Right ventricle myocardium superior (tissue), 1 donor: ENCODE measurements at regions of chr4 and their contacts with region 1.

Region 1: DNA sequence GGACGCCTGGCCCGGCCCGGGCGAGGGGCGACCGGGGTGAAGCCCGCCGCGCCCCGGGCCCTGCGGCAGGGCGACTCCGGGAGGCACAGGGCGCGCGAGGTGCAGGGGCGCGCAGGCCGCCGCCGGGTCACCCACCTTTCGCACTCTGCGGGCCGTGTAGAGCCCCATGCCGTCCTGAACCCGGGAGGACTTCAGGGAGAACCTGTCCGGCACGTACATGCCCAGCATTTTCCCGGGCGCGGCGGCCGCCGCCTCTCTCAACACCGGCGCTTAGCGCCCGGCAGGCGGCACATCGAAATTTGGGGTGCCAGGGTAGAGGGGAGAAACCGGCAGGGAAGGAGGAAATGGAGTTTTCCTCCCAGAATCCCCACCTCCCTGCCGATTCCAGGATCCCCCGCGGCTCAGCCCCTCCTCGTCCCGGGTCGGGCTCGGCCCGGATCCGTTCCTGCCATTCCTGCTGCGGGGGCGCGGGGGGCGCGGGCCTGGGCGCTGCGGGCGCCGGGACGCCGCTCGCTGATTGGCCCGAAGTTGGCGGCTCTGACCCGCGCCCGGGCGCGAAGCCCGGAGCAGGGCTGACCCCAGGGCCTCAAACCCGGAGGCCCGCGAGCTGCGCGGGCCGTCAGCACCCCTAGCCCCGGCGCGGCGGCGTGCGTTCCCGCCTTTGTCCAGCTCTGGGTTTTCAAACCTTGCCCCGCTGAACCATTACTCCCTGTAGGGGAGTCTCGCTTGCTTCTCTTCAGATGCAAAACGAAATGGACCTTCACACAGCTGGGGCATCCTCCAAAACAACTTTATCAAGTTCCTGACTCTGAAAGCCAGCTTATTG is at the start of gene PRDM5:
- DNase-seq: peak; percentile 78
- ATAC-seq: peak; percentile 82
- total RNA-seq, gene PRDM5: 8.0 TPM

Region 2: GRCh38 chr4:120692964-120693363 is 229.6 kb before region 1 on chr4:
- intact Hi-C with region 1: no loop called
- DNase-seq: no peak
- ATAC-seq: peak; percentile 50

Region 3: GRCh38 chr4:121072224-121073003 is 149.8 kb after region 1 on chr4 and contains the start of gene NDNF:
- intact Hi-C with region 1: loop called (anchors 10 kb)
- DNase-seq: peak; percentile 57
- ATAC-seq: peak; percentile 89
- total RNA-seq, gene NDNF: 8.1 TPM

Region 4: DNA sequence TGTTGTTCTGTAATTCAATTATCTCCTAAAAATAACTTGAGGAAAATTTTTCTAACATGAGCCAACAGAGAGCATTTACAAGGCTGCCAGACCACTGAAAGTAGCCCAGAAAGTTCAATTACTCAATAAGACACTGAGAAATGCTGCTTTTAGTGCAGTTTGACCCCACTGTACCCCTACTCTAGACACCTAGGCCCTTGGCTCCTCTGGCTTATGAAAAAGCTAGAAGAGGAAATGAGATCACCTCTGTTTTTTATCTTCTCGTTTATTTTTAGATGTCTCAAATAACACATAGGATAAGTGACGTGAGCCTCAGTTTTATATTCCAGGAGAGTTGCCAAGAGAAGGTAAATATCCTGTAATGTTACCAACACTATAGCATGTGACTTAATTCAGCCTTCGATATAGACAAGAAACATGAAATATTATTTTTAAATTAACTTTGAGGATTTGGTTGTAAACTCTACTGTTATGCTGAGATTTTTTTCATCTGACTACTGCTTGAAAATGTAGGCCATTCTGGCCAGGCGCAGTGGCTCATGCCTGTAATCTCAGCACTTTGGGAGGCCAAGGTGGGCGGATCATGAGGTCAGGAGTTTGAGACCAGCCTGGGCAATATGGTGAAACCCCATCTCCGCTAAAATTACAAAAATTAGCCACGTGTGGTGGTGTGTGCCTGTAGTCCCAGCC is 217.1 kb after region 1 on chr4:
- intact Hi-C with region 1: no loop called
- DNase-seq: no peak
- ATAC-seq: no peak